T-cell (primary cell): ENCODE measurements at regions of chr22 and their contacts with region 1.

Region 1: GRCh38 chr22:40768206-40768605 is 50.9 kb downstream of the SLC25A17 start:
- DNase-seq: no peak
- ATAC-seq: no peak
- H3K4me3 ChIP-seq: no peak overlapping the region
- H3K4me3 Mint-ChIP-seq: no peak overlapping the region
- H3K27ac ChIP-seq: no peak overlapping the region
- H3K27ac Mint-ChIP-seq: peak overlapping the region; percentile 46 to 57
- H3K4me1 ChIP-seq: peaks cover 9 to 19% of the 10 kb centered on the region in 2 experiments
- H3K4me1 Mint-ChIP-seq: peaks cover 14 to 21% (median 15%) of the 10 kb centered on the region in 3 donors
- H3K27me3 ChIP-seq: no peaks in the 10 kb centered on the region
- H3K27me3 Mint-ChIP-seq: no peaks in the 10 kb centered on the region

Region 2: DNA sequence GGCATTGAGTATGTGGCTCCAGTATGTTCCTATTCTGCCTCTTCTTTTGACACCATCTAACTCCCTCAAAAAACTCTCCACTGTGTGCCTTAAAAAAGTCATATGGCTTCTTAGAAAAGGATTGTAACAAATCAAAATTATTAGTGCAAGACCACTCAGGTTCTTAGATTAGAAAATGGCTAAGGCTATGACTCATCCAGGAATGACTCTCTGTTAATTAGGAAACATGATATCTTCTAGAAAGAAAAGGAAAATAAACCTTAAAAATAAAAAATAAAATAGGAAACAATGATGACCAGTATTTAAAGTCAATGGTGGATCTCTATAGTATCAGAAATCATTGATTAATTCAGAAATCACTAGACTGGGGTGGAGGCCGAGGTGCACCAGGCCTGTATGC is 29.2 kb after region 1 on chr22:
- CTCF ChIA-PET with region 1: interaction called, 6 to 13 read pairs
- POLR2A ChIA-PET with region 1: no interaction called
- DNase-seq: no peak
- ATAC-seq: no peak
- H3K4me3 ChIP-seq: no peak overlapping the region
- H3K4me3 Mint-ChIP-seq: no peak overlapping the region
- H3K27ac ChIP-seq: no peak overlapping the region
- H3K27ac Mint-ChIP-seq: no peak overlapping the region
- H3K4me1 ChIP-seq: no peaks in the 10 kb centered on the region
- H3K4me1 Mint-ChIP-seq: peaks cover 0 to 2% (median 0%) of the 10 kb centered on the region in 3 donors
- H3K27me3 ChIP-seq: no peaks in the 10 kb centered on the region
- H3K27me3 Mint-ChIP-seq: no peaks in the 10 kb centered on the region